ENCODE measurements at regions of chr4 and their contacts with region 1.

Region 1: GRCh38 chr4:100093091-100093866 is 97.0 kb downstream of the DDIT4L start:
- DNase-seq: peak; percentile 43 to 84
- ATAC-seq: peak; percentile 92 to 96
- H3K4me3 ChIP-seq: no peak overlapping the region
- H3K27ac ChIP-seq: peak overlapping the region; percentile 48 to 64; a peak in 4 of 6 replicates
- H3K4me1 ChIP-seq: peaks cover 11% of the 10 kb centered on the region; the same call in 2 of the 3 replicates
- CTCF ChIP-seq: peak; percentile 60
- EP300 ChIP-seq: no peak
- POLR2A ChIP-seq: no peak
- RAD21 ChIP-seq: peak; percentile 62 to 72

Region 2: DNA sequence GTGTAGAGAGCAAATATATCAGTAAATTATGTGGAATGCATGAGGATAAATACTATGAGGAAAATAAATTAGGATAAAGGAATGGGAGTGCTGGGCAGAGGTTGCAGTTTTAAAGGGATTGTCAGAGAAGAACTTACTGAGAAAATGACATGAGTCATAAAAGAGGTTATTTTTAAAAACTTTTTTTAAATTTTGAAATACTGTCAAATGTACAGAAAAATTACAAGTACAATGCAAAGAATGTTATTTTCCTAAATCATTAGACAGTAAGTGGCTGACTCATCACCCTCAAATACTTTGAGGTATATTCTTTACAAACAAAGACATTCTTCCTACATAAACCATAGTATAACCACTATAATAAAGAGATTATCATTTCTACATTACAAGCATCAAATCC is 113.4 kb before region 1 on chr4:
- CTCF ChIA-PET with region 1: no interaction called
- POLR2A ChIA-PET with region 1: no interaction called
- DNase-seq: no peak
- ATAC-seq: no peak
- H3K4me3 ChIP-seq: no peak overlapping the region
- H3K27ac ChIP-seq: no peak overlapping the region
- H3K4me1 ChIP-seq: no peaks in the 10 kb centered on the region
- CTCF ChIP-seq: no peak
- EP300 ChIP-seq: no peak
- POLR2A ChIP-seq: no peak
- RAD21 ChIP-seq: no peak

Region 3: DNA sequence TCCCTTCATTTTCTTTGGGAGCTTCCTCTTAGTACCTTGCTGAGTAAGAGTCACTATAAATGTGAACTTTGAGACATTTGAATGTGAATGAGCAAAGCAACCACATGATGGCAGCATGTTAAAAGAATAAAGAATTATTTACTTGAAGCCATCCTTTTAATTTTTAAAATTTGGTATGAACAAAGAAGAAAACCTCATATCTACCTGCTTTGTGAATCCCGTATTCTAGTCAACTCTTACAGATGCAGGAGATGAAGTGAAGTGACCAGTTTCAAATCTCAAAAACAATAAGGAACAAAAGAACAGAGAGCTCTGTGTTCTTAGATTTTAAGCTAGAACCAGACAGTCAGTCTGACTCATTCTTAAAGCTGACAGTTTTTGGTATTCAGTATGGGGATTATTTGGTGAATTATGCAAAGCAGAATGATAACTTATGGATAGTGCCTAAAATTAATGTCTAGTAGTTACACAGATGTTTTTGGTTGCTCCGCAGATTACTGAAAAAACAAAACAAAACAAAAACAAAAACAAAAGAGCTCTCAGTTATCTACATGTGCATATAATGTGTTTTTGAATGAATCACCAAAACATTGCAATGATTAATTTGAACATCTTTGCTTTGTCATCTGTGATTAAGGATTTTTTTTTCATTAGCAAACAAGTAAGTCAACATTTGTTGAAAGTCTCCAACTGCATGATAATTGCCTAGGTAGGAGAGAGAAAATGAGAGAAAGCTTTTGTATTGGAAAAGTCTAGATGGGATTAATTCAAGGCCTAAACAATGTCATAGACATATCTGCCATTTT is 95.0 kb before region 1 on chr4:
- CTCF ChIA-PET with region 1: interaction called, 11 read pairs
- POLR2A ChIA-PET with region 1: no interaction called
- DNase-seq: peak; percentile 13 to 34
- ATAC-seq: peak; percentile 50 to 54; a peak in 3 of 6 replicates
- H3K4me3 ChIP-seq: no peak overlapping the region
- H3K27ac ChIP-seq: no peak overlapping the region; a peak in 1 of 6 replicates
- H3K4me1 ChIP-seq: peaks cover 3% of the 10 kb centered on the region; the same call in 1 of the 3 replicates
- CTCF ChIP-seq: peak; percentile 52; the same call in 2 of the 3 replicates
- EP300 ChIP-seq: no peak
- POLR2A ChIP-seq: no peak
- RAD21 ChIP-seq: peak; percentile 41 to 63; a peak in 3 of 5 replicates

Region 4: GRCh38 chr4:100082852-100083251 is 10.4 kb before region 1 on chr4:
- CTCF ChIA-PET with region 1: interaction called, 12 read pairs
- POLR2A ChIA-PET with region 1: no interaction called
- DNase-seq: no peak
- ATAC-seq: no peak
- H3K4me3 ChIP-seq: no peak overlapping the region
- H3K27ac ChIP-seq: no peak overlapping the region
- H3K4me1 ChIP-seq: no peaks in the 10 kb centered on the region
- CTCF ChIP-seq: no peak
- EP300 ChIP-seq: no peak
- POLR2A ChIP-seq: no peak
- RAD21 ChIP-seq: no peak

Region 5: GRCh38 chr4:100103671-100104070 is 10.4 kb after region 1 on chr4:
- CTCF ChIA-PET with region 1: interaction called, 16 read pairs
- POLR2A ChIA-PET with region 1: no interaction called
- DNase-seq: no peak
- ATAC-seq: no peak
- H3K4me3 ChIP-seq: no peak overlapping the region
- H3K27ac ChIP-seq: no peak overlapping the region
- H3K4me1 ChIP-seq: no peaks in the 10 kb centered on the region
- CTCF ChIP-seq: no peak
- EP300 ChIP-seq: no peak
- POLR2A ChIP-seq: no peak
- RAD21 ChIP-seq: no peak

Region 6: GRCh38 chr4:100147198-100147597 is 53.9 kb after region 1 on chr4:
- CTCF ChIA-PET with region 1: no interaction called
- POLR2A ChIA-PET with region 1: no interaction called
- DNase-seq: no peak
- ATAC-seq: no peak
- H3K4me3 ChIP-seq: no peak overlapping the region
- H3K27ac ChIP-seq: no peak overlapping the region
- H3K4me1 ChIP-seq: no peaks in the 10 kb centered on the region
- CTCF ChIP-seq: no peak
- EP300 ChIP-seq: no peak
- POLR2A ChIP-seq: no peak
- RAD21 ChIP-seq: no peak

Region 7: DNA sequence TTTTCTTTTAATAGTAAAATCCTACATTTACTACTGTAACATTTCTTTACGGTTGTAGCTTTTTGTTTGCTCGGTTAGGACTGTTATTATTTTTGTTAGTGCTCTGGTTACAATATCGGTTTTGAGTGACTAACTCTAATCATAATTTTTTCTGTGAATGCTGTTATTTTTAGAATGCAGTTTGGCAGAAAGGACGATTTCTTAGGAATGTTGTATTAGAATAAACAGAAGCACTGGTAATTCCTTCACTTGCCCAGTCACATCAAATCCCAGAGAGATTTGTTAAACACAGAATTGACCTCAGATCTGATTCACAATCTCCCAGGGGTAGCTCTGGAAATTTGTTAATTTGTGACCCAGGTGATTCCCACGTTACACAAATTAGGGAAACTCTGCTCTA is 75.2 kb after region 1 on chr4:
- CTCF ChIA-PET with region 1: no interaction called
- POLR2A ChIA-PET with region 1: no interaction called
- DNase-seq: no peak
- ATAC-seq: no peak
- H3K4me3 ChIP-seq: no peak overlapping the region
- H3K27ac ChIP-seq: no peak overlapping the region
- H3K4me1 ChIP-seq: no peaks in the 10 kb centered on the region
- CTCF ChIP-seq: no peak
- EP300 ChIP-seq: no peak
- POLR2A ChIP-seq: no peak
- RAD21 ChIP-seq: no peak

Measured in A549 (cell line).